T-cell (primary cell): ENCODE measurements at regions of chr12 and their contacts with region 1.

Region 1: GRCh38 chr12:51488281-51488680 is 63.6 kb downstream of the SLC4A8 start:
- DNase-seq: no peak
- ATAC-seq: no peak
- H3K4me3 ChIP-seq: no peak overlapping the region
- H3K4me3 Mint-ChIP-seq: no peak overlapping the region
- H3K27ac ChIP-seq: no peak overlapping the region
- H3K27ac Mint-ChIP-seq: no peak overlapping the region
- H3K4me1 ChIP-seq: peaks cover 16% of the 10 kb centered on the region in 2 experiments
- H3K4me1 Mint-ChIP-seq: peaks cover 21 to 23% (median 22%) of the 10 kb centered on the region in 3 donors
- H3K27me3 ChIP-seq: no peaks in the 10 kb centered on the region
- H3K27me3 Mint-ChIP-seq: no peaks in the 10 kb centered on the region

Region 2: DNA sequence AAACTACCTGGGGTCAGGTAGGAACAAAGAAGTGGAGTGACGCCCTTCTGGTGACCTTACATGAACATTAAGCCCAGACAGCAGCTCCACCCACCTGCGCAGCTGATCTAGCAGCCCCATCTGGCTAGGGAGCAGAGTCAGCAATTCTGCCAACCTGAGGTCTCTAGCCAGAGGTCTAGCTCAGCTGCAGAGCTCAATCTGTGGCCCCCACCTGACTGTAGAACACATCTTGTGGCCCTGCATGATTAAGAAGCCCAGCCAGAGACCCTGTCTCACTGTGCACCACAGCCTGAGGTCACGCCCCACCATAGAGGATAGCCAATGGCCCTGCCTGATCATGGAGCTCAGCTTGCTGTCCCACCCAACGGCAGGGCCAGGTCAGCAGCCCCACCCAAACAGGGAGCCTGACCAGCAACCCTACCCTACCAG is 586.6 kb before region 1 on chr12:
- CTCF ChIA-PET with region 1: no interaction called
- POLR2A ChIA-PET with region 1: no interaction called
- DNase-seq: no peak
- ATAC-seq: no peak
- H3K4me3 ChIP-seq: no peak overlapping the region
- H3K4me3 Mint-ChIP-seq: no peak overlapping the region
- H3K27ac ChIP-seq: no peak overlapping the region
- H3K27ac Mint-ChIP-seq: no peak overlapping the region
- H3K4me1 ChIP-seq: no peaks in the 10 kb centered on the region
- H3K4me1 Mint-ChIP-seq: no peaks in the 10 kb centered on the region
- H3K27me3 ChIP-seq: no peaks in the 10 kb centered on the region
- H3K27me3 Mint-ChIP-seq: no peaks in the 10 kb centered on the region

Region 3: GRCh38 chr12:51403681-51404136 is 84.6 kb before region 1 on chr12:
- CTCF ChIA-PET with region 1: no interaction called
- POLR2A ChIA-PET with region 1: no interaction called
- DNase-seq: peak in 1 of 35 experiments; percentile 27
- ATAC-seq: no peak
- H3K4me3 ChIP-seq: no peak overlapping the region
- H3K4me3 Mint-ChIP-seq: no peak overlapping the region
- H3K27ac ChIP-seq: no peak overlapping the region
- H3K27ac Mint-ChIP-seq: no peak overlapping the region
- H3K4me1 ChIP-seq: peaks cover 2% of the 10 kb centered on the region in 2 experiments
- H3K4me1 Mint-ChIP-seq: peaks cover 0 to 9% (median 1%) of the 10 kb centered on the region in 3 donors
- H3K27me3 ChIP-seq: peaks cover 0 to 5% of the 10 kb centered on the region in 2 experiments
- H3K27me3 Mint-ChIP-seq: peaks cover 0 to 3% of the 10 kb centered on the region in 2 donors

Region 4: GRCh38 chr12:51449577-51450246 is 38.6 kb before region 1 on chr12:
- CTCF ChIA-PET with region 1: no interaction called
- POLR2A ChIA-PET with region 1: no interaction called
- DNase-seq: no peak
- ATAC-seq: no peak
- H3K4me3 ChIP-seq: no peak overlapping the region
- H3K4me3 Mint-ChIP-seq: no peak overlapping the region
- H3K27ac ChIP-seq: no peak overlapping the region
- H3K27ac Mint-ChIP-seq: no peak overlapping the region
- H3K4me1 ChIP-seq: no peaks in the 10 kb centered on the region
- H3K4me1 Mint-ChIP-seq: peaks cover 0 to 7% (median 0%) of the 10 kb centered on the region in 3 donors
- H3K27me3 ChIP-seq: no peaks in the 10 kb centered on the region
- H3K27me3 Mint-ChIP-seq: no peaks in the 10 kb centered on the region

Region 5: GRCh38 chr12:51533799-51534198 is 45.5 kb after region 1 on chr12:
- CTCF ChIA-PET with region 1: no interaction called
- POLR2A ChIA-PET with region 1: no interaction called
- DNase-seq: no peak
- ATAC-seq: no peak
- H3K4me3 ChIP-seq: no peak overlapping the region
- H3K4me3 Mint-ChIP-seq: no peak overlapping the region
- H3K27ac ChIP-seq: no peak overlapping the region
- H3K27ac Mint-ChIP-seq: no peak overlapping the region
- H3K4me1 ChIP-seq: peaks cover 0 to 6% of the 10 kb centered on the region in 2 experiments
- H3K4me1 Mint-ChIP-seq: peaks cover 0 to 6% (median 5%) of the 10 kb centered on the region in 3 donors
- H3K27me3 ChIP-seq: peaks cover 0 to 19% of the 10 kb centered on the region in 2 experiments
- H3K27me3 Mint-ChIP-seq: peaks cover 0 to 25% of the 10 kb centered on the region in 2 donors

Region 6: GRCh38 chr12:51631591-51631990 is 143.3 kb after region 1 on chr12:
- CTCF ChIA-PET with region 1: no interaction called
- POLR2A ChIA-PET with region 1: interaction called in 1 of 2 experiments, 10 read pairs
- DNase-seq: no peak
- ATAC-seq: no peak
- H3K4me3 ChIP-seq: no peak overlapping the region
- H3K4me3 Mint-ChIP-seq: no peak overlapping the region
- H3K27ac ChIP-seq: no peak overlapping the region
- H3K27ac Mint-ChIP-seq: no peak overlapping the region
- H3K4me1 ChIP-seq: no peaks in the 10 kb centered on the region
- H3K4me1 Mint-ChIP-seq: no peaks in the 10 kb centered on the region
- H3K27me3 ChIP-seq: no peaks in the 10 kb centered on the region
- H3K27me3 Mint-ChIP-seq: peaks cover 12 to 40% of the 10 kb centered on the region in 2 donors